ENCODE measurements at regions of chr10 and their contacts with region 1.

Region 1: GRCh38 chr10:103244663-103245271 is 920 bp upstream of the RPEL1 start:
- H3K4me3 ChIP-seq: no peak overlapping the region
- H3K27ac ChIP-seq: no peak overlapping the region
- H3K4me1 ChIP-seq: peaks cover 6% of the 10 kb centered on the region; the same call in 1 of the 2 replicates
- CTCF ChIP-seq: peak; percentile 42; the same call in 1 of the 2 replicates

Region 2: GRCh38 chr10:103069453-103070331 is 175.1 kb before region 1 on chr10:
- CTCF ChIA-PET with region 1: interaction called, 13 read pairs
- POLR2A ChIA-PET with region 1: no interaction called
- H3K4me3 ChIP-seq: no peak overlapping the region
- H3K27ac ChIP-seq: no peak overlapping the region
- H3K4me1 ChIP-seq: no peaks in the 10 kb centered on the region
- CTCF ChIP-seq: peak; percentile 53

Region 3: GRCh38 chr10:103192451-103193106 is 52.2 kb before region 1 on chr10:
- CTCF ChIA-PET with region 1: interaction called, 10 read pairs
- POLR2A ChIA-PET with region 1: interaction called, 7 read pairs
- H3K4me3 ChIP-seq: peak overlapping the region; percentile 69
- H3K27ac ChIP-seq: peak overlapping the region; percentile 73
- H3K4me1 ChIP-seq: peaks cover 15% of the 10 kb centered on the region
- CTCF ChIP-seq: no peak

Region 4: GRCh38 chr10:103231047-103231551 is 13.7 kb before region 1 on chr10:
- CTCF ChIA-PET with region 1: interaction called, 12 read pairs
- POLR2A ChIA-PET with region 1: interaction called, 3 read pairs
- H3K4me3 ChIP-seq: no peak overlapping the region
- H3K27ac ChIP-seq: no peak overlapping the region
- H3K4me1 ChIP-seq: no peaks in the 10 kb centered on the region
- CTCF ChIP-seq: no peak